ENCODE measurements at regions of chr1 and their contacts with region 1.

Region 1: GRCh38 chr1:160539990-160540858 is 17.2 kb upstream of the SLAMF6 start:
- DNase-seq: peak; percentile 72 to 83 (median 75)
- H3K4me3 ChIP-seq: peak overlapping the region in 1 of 2 donors; percentile 3
- H3K4me3 Mint-ChIP-seq: peak overlapping the region; percentile 36 to 90 (median 81)
- H3K27ac ChIP-seq: peak overlapping the region; percentile 51
- H3K27ac Mint-ChIP-seq: peak overlapping the region; percentile 87 to 94 (median 92)
- H3K4me1 ChIP-seq: peaks cover 65% of the 10 kb centered on the region
- H3K4me1 Mint-ChIP-seq: peaks cover 46 to 67% (median 55%) of the 10 kb centered on the region in 4 donors
- H3K27me3 ChIP-seq: no peaks in the 10 kb centered on the region
- H3K27me3 Mint-ChIP-seq: no peaks in the 10 kb centered on the region

Region 2: GRCh38 chr1:160428655-160429054 is 111.6 kb before region 1 on chr1:
- CTCF ChIA-PET with region 1: interaction called, 26 read pairs
- POLR2A ChIA-PET with region 1: interaction called, 34 read pairs
- intact Hi-C with region 1: loop called (anchors 1 kb)
- DNase-seq: peak in 3 of 5 donors; percentile 41 to 47 (median 41)
- H3K4me3 ChIP-seq: peak overlapping the region in 1 of 2 donors; percentile 11
- H3K4me3 Mint-ChIP-seq: peak overlapping the region; percentile 10 to 74 (median 60)
- H3K27ac ChIP-seq: peak overlapping the region; percentile 57
- H3K27ac Mint-ChIP-seq: peak overlapping the region; percentile 76 to 96 (median 92)
- H3K4me1 ChIP-seq: peaks cover 68% of the 10 kb centered on the region
- H3K4me1 Mint-ChIP-seq: peaks cover 49 to 63% (median 57%) of the 10 kb centered on the region in 4 donors
- H3K27me3 ChIP-seq: no peaks in the 10 kb centered on the region
- H3K27me3 Mint-ChIP-seq: no peaks in the 10 kb centered on the region

Region 3: DNA sequence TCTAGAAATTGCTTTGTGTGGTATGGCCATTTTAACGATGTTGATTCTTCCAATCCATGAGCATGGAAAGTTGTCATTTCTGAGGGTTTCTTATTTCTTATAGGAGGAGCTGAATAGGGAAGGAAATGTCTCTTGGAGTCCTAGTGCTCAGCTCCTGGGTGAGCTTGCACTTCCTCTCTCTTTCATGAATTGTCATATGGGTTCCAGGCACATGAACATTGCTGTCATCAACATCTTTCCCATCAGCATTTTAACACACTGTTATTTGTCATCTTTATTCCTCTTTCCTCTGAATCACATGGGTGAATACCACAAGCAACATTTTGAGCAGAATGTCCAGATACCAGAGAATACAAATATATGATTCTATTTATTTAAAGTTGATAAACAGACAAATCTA is 40.6 kb before region 1 on chr1:
- CTCF ChIA-PET with region 1: interaction called, 3 read pairs
- POLR2A ChIA-PET with region 1: interaction called, 5 read pairs
- intact Hi-C with region 1: loop called (anchors 5 kb)
- DNase-seq: no peak
- H3K4me3 ChIP-seq: no peak overlapping the region
- H3K4me3 Mint-ChIP-seq: peak overlapping the region in 1 of 8 donors; percentile 11
- H3K27ac ChIP-seq: no peak overlapping the region
- H3K27ac Mint-ChIP-seq: peak overlapping the region in 3 of 7 donors; percentile 22 to 59 (median 48)
- H3K4me1 ChIP-seq: peaks cover 40% of the 10 kb centered on the region
- H3K4me1 Mint-ChIP-seq: peaks cover 39 to 76% (median 66%) of the 10 kb centered on the region in 4 donors
- H3K27me3 ChIP-seq: no peaks in the 10 kb centered on the region
- H3K27me3 Mint-ChIP-seq: no peaks in the 10 kb centered on the region

Region 4: GRCh38 chr1:160550572-160551034 is 10.4 kb after region 1 on chr1:
- CTCF ChIA-PET with region 1: interaction called, 133 read pairs
- POLR2A ChIA-PET with region 1: interaction called, 43 read pairs
- intact Hi-C with region 1: no loop called
- DNase-seq: peak in 4 of 5 donors; percentile 43 to 54 (median 46)
- H3K4me3 ChIP-seq: no peak overlapping the region
- H3K4me3 Mint-ChIP-seq: peak overlapping the region in 1 of 8 donors; percentile 36
- H3K27ac ChIP-seq: no peak overlapping the region
- H3K27ac Mint-ChIP-seq: peak overlapping the region in 5 of 7 donors; percentile 27 to 77 (median 64)
- H3K4me1 ChIP-seq: peaks cover 36% of the 10 kb centered on the region
- H3K4me1 Mint-ChIP-seq: peaks cover 16 to 40% (median 27%) of the 10 kb centered on the region in 4 donors
- H3K27me3 ChIP-seq: no peaks in the 10 kb centered on the region
- H3K27me3 Mint-ChIP-seq: no peaks in the 10 kb centered on the region

Region 5: DNA sequence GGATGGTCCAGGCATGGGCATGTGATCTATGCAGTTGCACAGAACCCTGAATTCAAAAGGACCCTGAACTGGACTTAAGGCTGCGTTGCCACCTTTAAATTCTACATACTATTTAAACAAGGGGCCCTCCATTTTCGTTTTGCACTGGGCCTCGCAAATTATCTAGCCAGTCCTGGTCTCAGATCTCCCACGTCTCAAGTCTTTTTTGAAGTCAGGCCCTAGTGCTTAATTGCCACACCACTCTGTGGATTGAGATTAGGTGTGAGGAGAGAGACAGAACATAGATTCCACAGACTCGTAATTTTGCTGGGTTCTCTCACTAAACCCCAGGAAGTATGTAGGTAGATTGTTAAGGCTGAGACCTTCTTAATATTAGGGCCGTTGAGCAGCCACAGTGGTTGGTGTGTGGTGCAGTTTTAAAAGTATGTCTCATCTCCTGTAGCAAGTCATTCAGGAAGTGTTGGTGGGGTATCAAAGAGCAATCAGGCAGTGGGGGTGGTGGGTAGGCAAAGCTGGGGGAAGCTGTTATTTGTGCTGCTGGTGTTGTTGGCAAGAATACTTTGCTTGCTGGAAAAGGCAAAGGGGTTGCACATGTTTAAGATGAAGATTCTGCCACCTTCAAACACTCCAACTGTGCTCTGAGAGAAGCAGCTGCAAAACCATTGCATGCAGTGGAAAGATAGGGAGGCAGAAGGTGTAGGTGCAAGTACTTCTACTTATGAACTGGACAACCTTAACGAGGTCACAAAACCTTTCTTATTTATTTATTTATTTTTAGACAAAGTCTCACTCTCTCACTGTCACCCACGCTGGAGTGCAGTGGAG is 27.8 kb after region 1 on chr1:
- CTCF ChIA-PET with region 1: interaction called, 9 read pairs
- POLR2A ChIA-PET with region 1: interaction called, 639 read pairs
- intact Hi-C with region 1: loop called (anchors 1 kb)
- DNase-seq: peak; percentile 73 to 89 (median 75)
- H3K4me3 ChIP-seq: peak overlapping the region in 1 of 2 donors; percentile 18
- H3K4me3 Mint-ChIP-seq: peak overlapping the region; percentile 47 to 83 (median 69)
- H3K27ac ChIP-seq: peak overlapping the region; percentile 51
- H3K27ac Mint-ChIP-seq: peak overlapping the region; percentile 86 to 97 (median 93)
- H3K4me1 ChIP-seq: peaks cover 96% of the 10 kb centered on the region
- H3K4me1 Mint-ChIP-seq: peaks cover 82 to 98% (median 85%) of the 10 kb centered on the region in 4 donors
- H3K27me3 ChIP-seq: no peaks in the 10 kb centered on the region
- H3K27me3 Mint-ChIP-seq: no peaks in the 10 kb centered on the region

Region 6: GRCh38 chr1:160607011-160607671 is 66.9 kb after region 1 on chr1:
- CTCF ChIA-PET with region 1: interaction called, 359 read pairs
- POLR2A ChIA-PET with region 1: interaction called, 18 read pairs
- intact Hi-C with region 1: loop called (anchors 1 kb)
- DNase-seq: peak; percentile 79 to 85 (median 81)
- H3K4me3 ChIP-seq: no peak overlapping the region
- H3K4me3 Mint-ChIP-seq: peak overlapping the region in 6 of 8 donors; percentile 3 to 68 (median 37)
- H3K27ac ChIP-seq: peak overlapping the region; percentile 42
- H3K27ac Mint-ChIP-seq: peak overlapping the region; percentile 62 to 93 (median 79)
- H3K4me1 ChIP-seq: peaks cover 56% of the 10 kb centered on the region
- H3K4me1 Mint-ChIP-seq: peaks cover 42 to 62% (median 52%) of the 10 kb centered on the region in 4 donors
- H3K27me3 ChIP-seq: no peaks in the 10 kb centered on the region
- H3K27me3 Mint-ChIP-seq: no peaks in the 10 kb centered on the region

Region 7: GRCh38 chr1:160855181-160855981 is 315.2 kb after region 1 on chr1:
- CTCF ChIA-PET with region 1: no interaction called
- POLR2A ChIA-PET with region 1: no interaction called
- intact Hi-C with region 1: no loop called
- DNase-seq: no peak
- H3K4me3 ChIP-seq: no peak overlapping the region
- H3K4me3 Mint-ChIP-seq: no peak overlapping the region
- H3K27ac ChIP-seq: no peak overlapping the region
- H3K27ac Mint-ChIP-seq: no peak overlapping the region
- H3K4me1 ChIP-seq: peaks cover 13% of the 10 kb centered on the region
- H3K4me1 Mint-ChIP-seq: peaks cover 0 to 8% (median 1%) of the 10 kb centered on the region in 4 donors
- H3K27me3 ChIP-seq: no peaks in the 10 kb centered on the region
- H3K27me3 Mint-ChIP-seq: no peaks in the 10 kb centered on the region